Cardiac septum (tissue), 1 donor: ENCODE measurements at regions of chr2 and their contacts with region 1.

Region 1: DNA sequence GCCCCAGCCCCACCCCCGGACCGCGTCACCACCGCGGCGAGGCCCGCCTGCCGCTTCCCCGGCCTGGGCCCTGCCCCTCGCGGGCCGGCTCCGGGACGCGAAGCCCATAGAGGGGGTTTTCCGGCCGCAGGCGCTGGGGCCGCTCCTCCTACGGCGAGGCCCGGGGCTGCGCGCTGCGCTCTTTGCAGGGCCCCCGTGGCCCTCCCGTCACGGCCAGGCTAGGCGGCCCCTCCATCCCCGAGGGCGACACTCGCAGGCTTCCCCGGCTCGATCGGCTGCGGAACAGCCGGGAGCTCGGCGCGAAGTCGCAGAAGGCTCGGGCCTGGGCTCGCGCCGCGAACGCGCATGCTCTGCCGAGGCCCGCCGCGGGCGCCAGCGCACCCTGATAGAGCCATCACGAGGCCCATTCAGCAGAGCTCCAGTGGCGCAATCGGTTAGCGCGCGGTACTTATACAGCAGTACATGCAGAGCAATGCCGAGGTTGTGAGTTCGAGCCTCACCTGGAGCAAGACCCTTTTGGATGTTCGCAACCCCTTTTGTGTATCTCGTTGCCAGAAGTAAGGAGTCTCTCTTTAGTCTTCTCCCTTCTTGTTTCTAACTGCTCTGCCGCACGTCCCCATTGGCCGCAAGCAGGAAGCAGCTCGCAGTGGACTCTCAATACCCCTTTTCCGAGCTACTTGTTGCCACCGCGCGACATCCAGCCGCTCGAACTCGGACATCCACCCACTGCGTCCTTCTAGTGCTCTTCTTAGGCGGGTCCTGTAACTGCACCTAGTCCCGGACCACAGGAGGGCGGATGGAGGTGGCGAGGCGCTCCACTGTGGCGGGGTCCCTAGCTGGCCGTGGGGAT is 18.0 kb upstream of the HAAO start:
- DNase-seq: peak; percentile 98

Region 2: DNA sequence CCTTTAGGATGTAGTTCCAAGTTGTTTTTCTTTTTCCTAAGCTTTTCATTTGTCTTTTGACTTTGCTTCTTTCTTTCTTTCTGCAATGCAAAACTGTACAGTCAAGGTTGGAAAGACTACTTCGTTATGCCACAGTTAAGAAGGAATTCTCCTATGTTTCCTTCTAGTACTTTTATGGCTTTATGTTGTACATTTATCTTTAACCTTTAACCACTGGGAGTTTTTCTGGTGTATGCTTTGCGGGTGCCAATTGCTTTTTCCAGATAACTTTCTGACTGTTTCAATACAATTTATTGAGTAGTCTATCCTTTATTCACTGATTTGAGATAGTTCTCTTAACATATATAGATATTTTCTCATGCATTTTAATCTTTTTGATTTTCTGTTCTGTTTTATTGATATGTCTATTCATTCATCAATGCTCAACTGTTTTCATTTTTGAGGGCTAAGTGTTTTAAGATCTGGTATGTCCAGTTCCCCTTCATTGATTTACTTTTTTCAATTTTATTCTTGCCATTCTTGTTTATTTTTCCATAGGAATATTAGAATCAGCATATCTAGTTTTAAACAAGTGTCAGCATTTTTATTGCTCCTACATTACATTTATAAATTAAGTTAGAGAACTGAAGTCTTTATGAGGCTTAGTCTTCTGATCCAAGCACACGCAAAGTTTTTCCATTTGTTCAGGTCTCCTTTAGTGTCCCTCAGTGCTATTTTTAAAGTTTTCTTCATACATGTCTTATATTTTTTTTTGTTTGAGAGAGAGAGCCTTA is 399.4 kb before region 1 on chr2:
- intact Hi-C with region 1: no loop called
- DNase-seq: no peak

Region 3: DNA sequence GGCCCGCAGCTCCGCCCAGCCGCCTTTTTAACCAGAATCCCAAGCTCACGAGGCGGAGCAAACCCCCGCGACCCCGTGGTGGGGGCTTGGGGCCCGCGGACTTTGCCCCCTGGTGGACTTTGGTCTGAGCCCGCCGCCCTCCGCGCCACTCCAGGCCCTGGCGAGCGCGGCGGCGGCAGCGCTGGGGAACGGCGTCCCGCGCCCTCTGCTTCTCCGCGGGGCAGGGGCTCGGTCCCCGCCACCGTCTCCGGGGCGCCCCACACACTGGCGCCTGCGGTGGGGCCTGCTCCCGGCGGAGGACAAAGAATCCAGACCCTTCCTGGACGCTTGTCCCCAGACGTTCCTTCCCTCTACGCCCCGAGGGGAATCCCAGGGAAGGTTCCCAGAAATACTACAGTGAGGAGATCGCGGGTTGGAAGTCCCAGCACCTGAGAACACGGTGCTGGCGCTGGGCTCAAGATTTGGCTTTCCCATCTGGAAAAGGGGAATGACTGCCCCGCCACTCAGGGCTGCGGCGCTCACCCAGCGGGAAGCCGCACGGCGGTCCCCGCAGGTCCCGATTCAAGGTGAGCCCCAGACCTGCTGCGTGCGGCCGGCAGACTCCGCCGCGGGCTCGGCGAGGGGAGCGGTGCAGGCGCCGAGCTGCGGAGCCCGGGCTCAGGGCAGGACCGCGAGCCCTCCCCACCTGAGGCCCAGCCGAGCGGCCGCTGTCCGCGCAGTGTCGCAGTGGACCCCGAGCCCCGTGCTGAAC is 17.6 kb before region 1 on chr2 and contains the start of gene HAAO:
- intact Hi-C with region 1: loop called (anchors 2 kb)
- DNase-seq: peak; percentile 74
- total RNA-seq, gene HAAO: 2.5 TPM